ENCODE measurements at regions of chr11 and their contacts with region 1.

Region 1: DNA sequence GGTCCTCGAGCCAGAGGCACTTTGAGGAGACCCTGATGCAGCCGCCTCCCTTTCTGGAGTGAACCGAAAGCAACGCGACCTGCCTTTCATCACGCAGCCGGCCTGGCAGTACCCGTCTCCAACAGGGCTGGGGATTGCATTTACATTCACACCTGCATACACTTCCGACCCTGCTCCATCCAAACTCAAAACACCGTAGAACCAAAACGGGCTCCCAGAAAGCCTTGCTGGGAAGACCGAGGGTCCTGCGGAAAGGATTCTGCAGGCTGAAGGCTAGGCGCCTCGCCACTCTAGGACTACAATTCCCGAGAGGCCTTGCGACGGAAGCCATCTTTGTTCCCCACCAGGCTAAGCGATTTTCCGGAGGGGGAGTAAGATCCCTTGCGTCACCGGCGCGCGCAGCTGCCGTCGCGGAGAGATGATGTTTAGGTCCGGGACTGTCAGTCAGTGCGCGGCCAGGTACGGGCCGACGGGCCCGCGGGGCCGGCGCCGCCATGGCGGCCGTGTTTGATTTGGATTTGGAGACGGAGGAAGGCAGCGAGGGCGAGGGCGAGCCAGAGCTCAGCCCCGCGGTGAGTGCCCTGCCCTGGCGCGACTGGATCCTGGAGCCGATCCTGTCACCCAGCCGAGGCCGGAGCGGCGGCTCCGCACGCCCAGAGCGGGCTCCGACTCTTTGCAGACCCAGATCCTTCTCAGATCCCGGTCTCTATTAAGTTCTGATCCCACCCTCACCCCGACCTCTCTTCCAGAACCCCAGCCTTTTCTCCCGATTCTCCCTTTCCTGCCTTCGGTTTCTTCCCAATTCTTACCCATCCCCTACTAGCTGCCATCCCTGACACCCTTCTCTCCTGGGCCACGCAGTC is at the start of gene RPS6KB2:
- DNase-seq: peak; percentile 98 to 100 (median 99)
- H3K4me3 ChIP-seq: peak within 1 kb of the TSS; percentile 89
- H3K27ac ChIP-seq: peak within 1 kb of the TSS; percentile 60 to 80
- H3K4me1 ChIP-seq: peaks cover 5% of the 10 kb centered on the region
- H3K27me3 ChIP-seq: no peaks in the 10 kb centered on the region
- CTCF ChIP-seq: no peak
- EP300 ChIP-seq: no peak
- POLR2A ChIP-seq: peak; percentile 89
- total RNA-seq, gene RPS6KB2: 24.8 to 38.6 (median 33.1) TPM

Region 2: DNA sequence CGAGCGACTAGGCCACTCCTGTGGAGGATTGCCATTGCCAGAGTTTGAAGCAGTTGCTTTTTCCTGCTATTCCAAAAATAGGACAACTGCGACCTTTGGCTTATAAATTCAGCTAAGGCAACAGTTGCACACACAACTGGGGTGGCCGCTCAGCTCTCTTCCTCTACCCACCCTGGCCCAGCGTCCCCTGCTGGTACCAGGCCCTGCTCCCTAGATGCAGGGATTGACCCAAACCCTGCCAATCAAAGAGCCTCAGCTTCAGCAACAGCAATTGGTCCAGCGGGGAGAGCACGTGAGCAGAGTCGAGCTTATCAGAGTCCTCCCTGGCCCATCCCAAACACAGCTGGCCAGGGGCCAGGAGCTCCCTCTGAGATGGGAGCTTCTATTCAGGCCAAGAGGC is 117.0 kb after region 1 on chr11:
- intact Hi-C with region 1: no loop called
- DNase-seq: peak in 1 of 5 donors; percentile 64
- H3K4me3 ChIP-seq: no peak overlapping the region
- H3K27ac ChIP-seq: no peak overlapping the region
- H3K4me1 ChIP-seq: no peaks in the 10 kb centered on the region
- H3K27me3 ChIP-seq: no peaks in the 10 kb centered on the region
- CTCF ChIP-seq: no peak
- EP300 ChIP-seq: no peak
- POLR2A ChIP-seq: no peak

Region 3: DNA sequence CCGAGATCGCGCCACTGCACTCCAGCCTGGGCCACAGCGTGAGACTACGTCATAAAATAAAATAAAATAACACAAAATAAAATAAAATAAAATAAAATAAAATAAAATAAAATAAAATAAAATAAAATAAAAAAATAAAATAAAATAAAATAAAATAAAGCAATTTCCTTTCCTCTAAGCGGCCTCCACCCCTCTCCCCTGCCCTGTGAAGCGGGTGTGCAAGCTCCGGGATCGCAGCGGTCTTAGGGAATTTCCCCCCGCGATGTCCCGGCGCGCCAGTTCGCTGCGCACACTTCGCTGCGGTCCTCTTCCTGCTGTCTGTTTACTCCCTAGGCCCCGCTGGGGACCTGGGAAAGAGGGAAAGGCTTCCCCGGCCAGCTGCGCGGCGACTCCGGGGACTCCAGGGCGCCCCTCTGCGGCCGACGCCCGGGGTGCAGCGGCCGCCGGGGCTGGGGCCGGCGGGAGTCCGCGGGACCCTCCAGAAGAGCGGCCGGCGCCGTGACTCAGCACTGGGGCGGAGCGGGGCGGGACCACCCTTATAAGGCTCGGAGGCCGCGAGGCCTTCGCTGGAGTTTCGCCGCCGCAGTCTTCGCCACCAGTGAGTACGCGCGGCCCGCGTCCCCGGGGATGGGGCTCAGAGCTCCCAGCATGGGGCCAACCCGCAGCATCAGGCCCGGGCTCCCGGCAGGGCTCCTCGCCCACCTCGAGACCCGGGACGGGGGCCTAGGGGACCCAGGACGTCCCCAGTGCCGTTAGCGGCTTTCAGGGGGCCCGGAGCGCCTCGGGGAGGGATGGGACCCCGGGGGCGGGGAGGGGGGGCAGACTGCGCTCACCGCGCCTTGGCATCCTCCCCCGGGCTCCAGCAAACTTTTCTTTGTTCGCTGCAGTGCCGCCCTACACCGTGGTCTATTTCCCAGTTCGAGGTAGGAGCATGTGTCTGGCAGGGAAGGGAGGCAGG is 155.2 kb after region 1 on chr11 and contains the start of gene GSTP1:
- intact Hi-C with region 1: loop called in 1 of 4 experiments (anchors 5 kb)
- DNase-seq: peak; percentile 93 to 96 (median 94)
- H3K4me3 ChIP-seq: peak within 1 kb of the TSS; percentile 90
- H3K27ac ChIP-seq: peak within 1 kb of the TSS; percentile 97 to 98
- H3K4me1 ChIP-seq: peaks cover 7% of the 10 kb centered on the region
- H3K27me3 ChIP-seq: no peaks in the 10 kb centered on the region
- CTCF ChIP-seq: peak; percentile 76 to 98 (median 96)
- EP300 ChIP-seq: no peak
- POLR2A ChIP-seq: peak; percentile 92
- total RNA-seq, gene GSTP1: 358 to 1,321 (median 474) TPM

Measured in ovary (tissue), 10 donors.